ENCODE measurements at regions of chr10 and their contacts with region 1.

Region 1: DNA sequence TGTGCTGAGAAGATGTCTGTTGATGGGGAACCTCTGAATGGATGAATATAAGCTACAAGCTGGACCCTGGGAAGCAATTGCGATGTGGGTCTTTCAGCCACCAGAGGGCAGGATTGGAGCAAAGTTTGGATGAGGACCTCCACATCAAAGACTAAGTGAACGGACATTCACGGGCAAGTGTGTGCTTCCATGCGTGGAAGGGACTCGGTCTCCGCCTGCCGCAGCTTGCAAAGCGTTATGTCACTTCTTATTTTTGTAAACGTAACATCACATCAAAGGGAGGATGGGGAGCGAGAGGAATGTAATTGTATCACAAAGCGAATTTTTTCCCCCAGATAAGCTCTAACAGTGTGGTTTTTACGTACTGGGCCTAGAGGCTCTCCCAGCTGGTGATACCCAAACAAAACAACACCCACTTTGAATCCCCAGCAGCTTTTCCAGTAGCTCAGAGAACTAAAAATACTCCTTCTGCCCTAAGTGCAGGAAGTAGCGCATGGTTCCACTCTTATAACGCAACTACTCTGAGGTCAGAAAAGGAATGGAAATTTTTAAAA is 65.0 kb downstream of the VWA2 start:
- DNase-seq: peak; percentile 86
- ATAC-seq: peak; percentile 76
- H3K4me3 Mint-ChIP-seq: peak overlapping the region; percentile 69
- H3K27ac Mint-ChIP-seq: peak overlapping the region; percentile 59
- H3K4me1 Mint-ChIP-seq: peaks cover 8% of the 10 kb centered on the region
- H3K27me3 Mint-ChIP-seq: no peaks in the 10 kb centered on the region

Region 2: GRCh38 chr10:114285961-114286441 is 18.1 kb before region 1 on chr10:
- CTCF ChIA-PET with region 1: interaction called, 27 read pairs
- POLR2A ChIA-PET with region 1: no interaction called
- intact Hi-C with region 1: no loop called
- DNase-seq: no peak
- ATAC-seq: no peak
- H3K4me3 Mint-ChIP-seq: no peak overlapping the region
- H3K27ac Mint-ChIP-seq: no peak overlapping the region
- H3K4me1 Mint-ChIP-seq: no peaks in the 10 kb centered on the region
- H3K27me3 Mint-ChIP-seq: no peaks in the 10 kb centered on the region

Region 3: GRCh38 chr10:114327537-114328440 is 23.7 kb after region 1 on chr10:
- CTCF ChIA-PET with region 1: interaction called, 16 read pairs
- POLR2A ChIA-PET with region 1: no interaction called
- intact Hi-C with region 1: no loop called
- DNase-seq: no peak
- ATAC-seq: no peak
- H3K4me3 Mint-ChIP-seq: no peak overlapping the region
- H3K27ac Mint-ChIP-seq: no peak overlapping the region
- H3K4me1 Mint-ChIP-seq: no peaks in the 10 kb centered on the region
- H3K27me3 Mint-ChIP-seq: no peaks in the 10 kb centered on the region

Region 4: GRCh38 chr10:114437456-114438292 is 133.6 kb after region 1 on chr10:
- CTCF ChIA-PET with region 1: interaction called, 12 read pairs
- POLR2A ChIA-PET with region 1: no interaction called
- intact Hi-C with region 1: loop called in 1 of 2 experiments (anchors 1 kb)
- DNase-seq: no peak
- ATAC-seq: no peak
- H3K4me3 Mint-ChIP-seq: no peak overlapping the region
- H3K27ac Mint-ChIP-seq: peak overlapping the region; percentile 5
- H3K4me1 Mint-ChIP-seq: no peaks in the 10 kb centered on the region
- H3K27me3 Mint-ChIP-seq: no peaks in the 10 kb centered on the region

Region 5: GRCh38 chr10:114550756-114551635 is 246.9 kb after region 1 on chr10:
- CTCF ChIA-PET with region 1: interaction called, 8 read pairs
- POLR2A ChIA-PET with region 1: no interaction called
- intact Hi-C with region 1: loop called (anchors 1 kb)
- DNase-seq: no peak
- ATAC-seq: no peak
- H3K4me3 Mint-ChIP-seq: no peak overlapping the region
- H3K27ac Mint-ChIP-seq: no peak overlapping the region
- H3K4me1 Mint-ChIP-seq: peaks cover 28% of the 10 kb centered on the region
- H3K27me3 Mint-ChIP-seq: no peaks in the 10 kb centered on the region

Region 6: GRCh38 chr10:114703377-114704107 is 399.4 kb after region 1 on chr10:
- CTCF ChIA-PET with region 1: interaction called, 14 read pairs
- POLR2A ChIA-PET with region 1: no interaction called
- intact Hi-C with region 1: loop called (anchors 1 to 5 kb)
- DNase-seq: peak; percentile 28
- ATAC-seq: peak; percentile 30
- H3K4me3 Mint-ChIP-seq: no peak overlapping the region
- H3K27ac Mint-ChIP-seq: no peak overlapping the region
- H3K4me1 Mint-ChIP-seq: no peaks in the 10 kb centered on the region
- H3K27me3 Mint-ChIP-seq: peaks cover 3% of the 10 kb centered on the region

Region 7: DNA sequence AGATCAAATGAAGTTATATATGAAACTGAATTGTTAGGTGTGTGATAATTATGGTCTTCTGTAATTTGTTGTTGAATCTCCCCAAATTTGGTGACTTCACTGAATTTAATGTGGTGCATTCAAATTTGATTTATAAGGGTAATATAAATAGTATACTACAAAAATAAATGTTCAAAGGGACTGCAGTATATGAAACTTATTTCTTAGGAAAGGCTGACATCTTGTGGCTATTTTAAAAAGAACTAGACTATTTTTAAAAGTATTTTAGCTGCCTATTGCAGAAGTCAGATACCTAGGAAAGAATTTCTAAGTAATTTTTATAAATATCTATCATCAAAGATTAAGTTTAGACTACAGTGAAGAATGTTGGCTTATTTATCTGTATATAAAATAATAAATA is 825.7 kb after region 1 on chr10:
- CTCF ChIA-PET with region 1: interaction called, 16 read pairs
- POLR2A ChIA-PET with region 1: no interaction called
- intact Hi-C with region 1: loop called (anchors 1 to 5 kb)
- DNase-seq: no peak
- ATAC-seq: no peak
- H3K4me3 Mint-ChIP-seq: no peak overlapping the region
- H3K27ac Mint-ChIP-seq: no peak overlapping the region
- H3K4me1 Mint-ChIP-seq: no peaks in the 10 kb centered on the region
- H3K27me3 Mint-ChIP-seq: peaks cover 4% of the 10 kb centered on the region

Measured in activated CD4-positive, alpha-beta T cell treated with anti-CD3 and anti-CD28 coated beads for 36 hours (primary cell).